GM13977 (cell line): ENCODE measurements at regions of chr1 and their contacts with region 1.

Region 1: GRCh38 chr1:147273409-147274336 is 31.2 kb downstream of the CHD1L start:
- DNase-seq: peak; percentile 54
- CTCF ChIP-seq: peak; percentile 51

Region 2: GRCh38 chr1:147225193-147225730 is 48.4 kb before region 1 on chr1 and contains the start of gene FMO5:
- in situ Hi-C with region 1: no loop called
- DNase-seq: peak; percentile 58
- CTCF ChIP-seq: no peak

Region 3: DNA sequence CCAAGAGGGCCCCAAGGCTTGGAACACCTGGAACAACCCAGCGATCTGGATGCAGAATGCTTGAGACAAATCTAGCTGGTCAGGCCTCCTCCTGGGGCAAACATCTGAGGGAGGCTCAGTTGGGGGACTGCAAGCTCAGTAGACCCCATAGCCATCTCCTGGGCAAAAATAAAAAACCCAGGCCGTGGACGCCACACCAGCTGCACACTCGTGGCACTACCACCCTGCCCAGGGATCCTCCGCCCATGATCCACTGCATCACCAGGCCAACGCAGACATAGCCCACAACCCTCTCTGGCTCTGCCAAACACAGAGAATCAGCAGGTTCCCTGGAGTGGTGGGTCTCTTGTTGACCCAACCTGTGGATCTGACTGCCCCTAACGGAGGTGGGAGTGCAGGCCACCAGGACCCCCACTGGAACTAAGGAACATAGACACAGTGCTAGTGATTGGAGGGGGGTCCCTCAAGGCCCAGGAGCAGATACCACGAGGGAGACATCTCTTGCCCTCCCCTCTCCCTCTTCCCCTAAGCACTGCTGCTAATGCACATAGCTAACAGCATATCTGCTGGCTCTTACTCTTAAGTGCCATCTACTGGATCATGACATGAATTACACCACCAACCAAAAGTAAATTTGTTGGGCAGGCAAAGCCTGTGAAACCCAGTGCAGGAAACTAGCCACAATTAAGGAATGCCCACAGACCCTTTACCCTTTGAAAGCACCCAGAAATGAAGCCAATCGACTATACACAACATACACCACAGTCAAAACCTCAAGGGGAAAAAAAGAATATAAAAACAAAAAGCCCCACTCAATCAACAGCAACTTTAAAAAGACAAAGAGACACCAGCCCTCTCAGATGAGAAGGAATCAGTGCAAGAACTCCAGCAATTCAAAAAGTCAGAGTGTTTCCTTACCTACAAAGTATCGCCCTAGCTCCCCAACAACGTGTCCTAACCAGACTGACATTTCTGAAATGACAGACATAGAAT is 116.2 kb after region 1 on chr1:
- in situ Hi-C with region 1: loop called (anchors 10 kb)
- DNase-seq: peak; percentile 66
- CTCF ChIP-seq: peak; percentile 76

Region 4: DNA sequence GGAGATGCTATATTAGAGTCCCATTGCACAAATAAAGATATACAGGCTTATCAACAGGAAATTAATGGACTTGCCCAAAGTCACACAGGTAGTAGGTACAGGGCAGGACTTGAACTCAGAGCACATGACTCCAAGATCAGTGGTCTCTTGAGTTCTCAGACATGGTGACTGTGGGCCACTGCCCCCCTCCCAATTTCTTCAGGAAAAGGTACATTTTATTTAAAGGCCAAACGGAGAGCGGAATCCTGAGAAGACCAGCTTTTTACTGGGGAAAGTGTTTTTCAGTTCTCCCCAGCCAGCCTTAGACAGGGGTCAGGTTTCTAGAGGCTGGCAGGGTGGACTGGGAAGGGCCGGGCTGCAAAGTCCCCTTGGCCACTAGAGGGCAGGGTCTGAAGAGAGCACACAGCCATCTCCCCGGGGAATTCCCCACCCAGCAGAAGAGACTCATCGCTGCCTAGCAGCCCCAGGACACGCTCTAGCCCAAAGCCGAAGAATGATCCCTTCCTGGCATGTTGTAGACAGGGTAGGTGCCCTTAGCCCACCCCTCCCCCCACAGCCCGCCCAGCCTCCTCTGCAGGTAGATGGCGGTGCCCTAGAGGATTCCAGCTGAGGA is 367.0 kb after region 1 on chr1:
- in situ Hi-C with region 1: loop called (anchors 25 kb)
- DNase-seq: peak; percentile 81
- CTCF ChIP-seq: peak; percentile 92

Region 5: DNA sequence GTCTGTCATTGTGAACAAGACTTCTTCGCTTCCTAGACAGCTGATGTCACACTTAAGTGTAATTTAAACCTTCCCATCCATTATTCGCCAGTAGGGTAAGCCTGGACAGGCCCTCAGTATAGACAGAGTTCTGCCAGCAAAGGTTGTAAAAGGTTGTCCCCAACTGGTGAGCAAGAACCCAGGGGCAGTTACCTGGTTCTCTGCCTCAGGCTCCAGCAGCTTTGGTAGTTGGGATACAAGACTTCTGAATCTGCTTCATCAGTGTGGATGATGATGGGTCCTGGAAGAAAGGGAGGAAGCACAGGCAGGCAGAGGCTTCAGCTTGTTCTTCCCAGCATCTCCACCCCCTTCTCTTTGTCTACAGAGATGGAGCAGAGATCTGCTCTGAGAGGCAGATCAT is 381.3 kb after region 1 on chr1:
- in situ Hi-C with region 1: no loop called
- DNase-seq: no peak
- CTCF ChIP-seq: no peak

Region 6: GRCh38 chr1:147762233-147763024 is 488.8 kb after region 1 on chr1:
- in situ Hi-C with region 1: no loop called
- DNase-seq: no peak
- CTCF ChIP-seq: no peak

Region 7: DNA sequence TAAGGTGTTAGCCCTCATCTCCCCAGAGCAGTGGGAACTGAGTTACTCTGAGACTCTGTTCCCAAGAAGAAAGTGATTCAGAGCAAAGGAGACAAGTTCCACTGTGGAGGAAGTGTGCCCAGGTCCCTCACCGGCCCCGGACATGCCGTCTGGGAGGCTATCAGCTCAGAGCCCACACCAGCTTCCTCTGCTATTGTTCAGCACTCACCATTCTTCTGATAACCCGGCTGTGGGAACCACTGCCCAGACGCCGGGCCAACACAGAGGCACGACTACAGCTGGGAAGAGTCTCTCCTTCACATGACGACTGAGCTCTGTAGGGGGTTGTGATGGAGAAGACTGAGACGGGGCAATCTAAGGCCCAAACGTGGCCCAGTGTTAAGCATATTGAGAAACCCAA is 520.9 kb after region 1 on chr1:
- in situ Hi-C with region 1: no loop called
- DNase-seq: no peak
- CTCF ChIP-seq: no peak